IMR-90 (cell line): ENCODE measurements at regions of chr11 and their contacts with region 1.

Region 1: DNA sequence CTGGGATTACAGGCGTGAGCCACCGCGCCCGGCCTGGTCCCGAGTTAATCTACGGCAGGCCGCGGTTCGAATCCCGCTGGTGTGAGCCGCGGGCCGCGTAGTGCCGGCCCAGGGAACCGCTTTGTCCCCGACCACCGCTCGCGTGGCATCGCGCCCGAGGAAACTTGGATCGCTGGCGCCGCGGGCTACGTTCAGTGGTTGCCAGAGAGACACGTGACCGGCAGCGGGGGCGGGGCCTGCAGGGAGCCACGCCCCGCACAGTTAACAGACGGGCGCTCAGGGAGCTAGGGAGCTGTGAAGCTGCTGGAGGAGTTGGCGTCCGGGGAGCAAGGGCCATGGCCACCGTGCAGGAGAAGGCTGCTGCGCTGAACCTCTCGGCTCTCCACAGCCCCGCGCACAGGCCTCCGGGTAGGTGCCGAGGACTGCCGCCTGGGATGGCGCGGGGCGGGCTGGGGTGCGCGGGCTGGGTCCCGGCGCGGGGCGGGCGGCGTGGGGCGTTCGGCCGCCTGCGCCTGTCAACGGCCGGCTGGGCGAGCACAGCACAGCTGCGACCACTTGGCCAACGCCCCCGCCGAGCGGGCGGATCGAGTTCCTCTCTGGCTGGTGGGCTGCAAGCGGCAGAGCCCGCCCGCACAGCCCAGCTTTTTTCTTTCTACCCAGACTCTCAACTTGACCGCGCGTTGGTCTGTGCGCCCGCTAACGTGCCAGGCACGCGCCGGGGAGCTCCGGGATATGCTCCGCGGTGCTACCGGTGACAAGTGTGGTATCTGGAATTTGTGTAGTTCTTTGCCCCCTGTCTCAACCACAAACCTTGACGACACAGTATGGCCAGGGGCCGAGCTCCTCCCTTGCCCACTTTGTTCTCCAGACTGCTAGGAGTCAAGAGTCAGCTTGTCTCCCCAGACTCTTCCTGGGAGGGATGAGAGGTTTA is at the start of gene DEPDC7:
- DNase-seq: peak; percentile 82
- ATAC-seq: peak; percentile 89
- H3K4me3 ChIP-seq: peak within 1 kb of the TSS; percentile 66
- H3K27ac ChIP-seq: peak within 1 kb of the TSS; percentile 26
- H3K4me1 ChIP-seq: peaks cover 11% of the 10 kb centered on the region
- H3K27me3 ChIP-seq: no peaks in the 10 kb centered on the region
- CTCF ChIP-seq: no peak
- POLR2A ChIP-seq: no peak
- RAD21 ChIP-seq: no peak
- total RNA-seq, gene DEPDC7: 9.7 TPM in 2 replicates

Region 2: GRCh38 chr11:32920570-32920969 is 95.3 kb before region 1 on chr11:
- CTCF ChIA-PET with region 1: no interaction called
- POLR2A ChIA-PET with region 1: no interaction called
- dilution Hi-C with region 1: no loop called
- in situ Hi-C with region 1: no loop called
- intact Hi-C with region 1: no loop called
- DNase-seq: no peak
- ATAC-seq: no peak
- H3K4me3 ChIP-seq: no peak overlapping the region
- H3K27ac ChIP-seq: no peak overlapping the region
- H3K4me1 ChIP-seq: no peaks in the 10 kb centered on the region
- H3K27me3 ChIP-seq: no peaks in the 10 kb centered on the region
- CTCF ChIP-seq: no peak
- POLR2A ChIP-seq: no peak
- RAD21 ChIP-seq: no peak

Region 3: DNA sequence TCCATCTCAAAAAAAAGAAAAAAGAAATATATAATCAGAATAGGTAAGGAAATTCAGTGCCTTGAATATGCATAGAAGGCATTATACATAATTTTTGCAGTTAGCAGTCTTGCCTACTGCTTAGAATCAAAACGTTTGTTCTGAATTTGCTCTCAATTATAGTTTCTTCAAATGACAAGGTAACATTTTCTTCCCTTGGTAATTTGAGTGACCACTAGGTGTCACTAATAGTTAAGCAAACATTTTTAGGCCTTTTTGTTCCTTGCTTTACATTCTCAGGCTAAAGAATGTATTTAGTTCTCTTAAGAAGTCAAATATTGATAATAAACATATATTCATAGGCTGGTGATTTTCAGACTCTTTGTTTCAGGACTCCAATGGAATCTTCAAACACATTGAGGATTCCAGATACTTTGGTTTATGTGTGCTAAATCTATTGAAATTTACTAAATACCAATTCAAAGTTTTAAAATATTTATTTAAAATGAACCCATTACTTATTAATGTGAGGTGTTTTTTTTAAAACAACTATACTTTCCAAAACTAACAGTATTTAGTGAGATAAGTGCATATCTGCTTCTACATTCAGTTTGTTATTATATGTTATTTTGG is 55.2 kb before region 1 on chr11:
- CTCF ChIA-PET with region 1: no interaction called
- POLR2A ChIA-PET with region 1: no interaction called
- dilution Hi-C with region 1: no loop called
- in situ Hi-C with region 1: no loop called
- intact Hi-C with region 1: loop called (anchors 5 kb)
- DNase-seq: peak; percentile 71
- ATAC-seq: peak; percentile 61; the same call in 1 of the 2 replicates
- H3K4me3 ChIP-seq: no peak overlapping the region
- H3K27ac ChIP-seq: no peak overlapping the region
- H3K4me1 ChIP-seq: no peaks in the 10 kb centered on the region
- H3K27me3 ChIP-seq: no peaks in the 10 kb centered on the region
- CTCF ChIP-seq: peak; percentile 78
- POLR2A ChIP-seq: no peak
- RAD21 ChIP-seq: peak; percentile 85

Region 4: GRCh38 chr11:33463059-33463458 is 447.2 kb after region 1 on chr11:
- CTCF ChIA-PET with region 1: no interaction called
- POLR2A ChIA-PET with region 1: no interaction called
- dilution Hi-C with region 1: no loop called
- in situ Hi-C with region 1: no loop called
- intact Hi-C with region 1: no loop called
- DNase-seq: peak; percentile 69
- ATAC-seq: no peak
- H3K4me3 ChIP-seq: no peak overlapping the region
- H3K27ac ChIP-seq: no peak overlapping the region
- H3K4me1 ChIP-seq: peaks cover 2% of the 10 kb centered on the region; the same call in 1 of the 2 replicates
- H3K27me3 ChIP-seq: no peaks in the 10 kb centered on the region; the same call in 1 of the 2 replicates
- CTCF ChIP-seq: no peak
- POLR2A ChIP-seq: no peak
- RAD21 ChIP-seq: no peak